Breast epithelium (tissue), 4 donors: ENCODE measurements at regions of chr6 and their contacts with region 1.

Region 1: DNA sequence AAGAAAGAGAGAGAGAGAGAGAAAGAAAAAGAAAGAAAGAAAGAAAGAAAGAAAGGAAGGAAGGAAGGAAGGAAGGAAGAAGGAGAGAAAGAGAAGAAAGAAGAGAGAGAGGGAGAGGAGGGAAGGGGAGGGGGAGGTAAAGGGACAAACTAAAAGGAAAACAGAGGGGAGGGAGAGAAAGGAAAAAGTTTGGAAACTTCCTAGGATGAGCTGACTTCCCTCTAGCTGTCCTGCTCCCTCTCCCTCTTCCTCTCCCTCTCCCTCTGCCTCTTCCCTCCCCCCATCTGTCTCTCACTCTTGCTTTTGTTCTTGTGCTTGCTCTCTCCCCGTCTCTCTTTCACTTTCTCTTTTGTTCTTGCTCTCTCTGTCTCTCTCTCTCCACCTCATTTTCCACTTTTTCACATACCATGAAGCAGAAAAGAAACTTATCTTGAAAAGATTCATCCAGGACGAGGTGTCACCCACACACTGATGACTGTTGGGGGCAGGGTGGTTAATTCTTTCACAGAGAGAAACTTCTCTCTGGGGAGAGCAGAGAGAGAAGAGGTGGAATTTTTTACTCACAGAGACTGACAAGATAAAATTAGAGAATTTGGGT is 56.4 kb upstream of the DUSP22 start:
- DNase-seq: no peak
- H3K4me3 ChIP-seq: peak overlapping the region; percentile 22 to 56 (median 35)
- H3K27ac ChIP-seq: peak overlapping the region; percentile 26 to 57
- H3K4me1 ChIP-seq: no peaks in the 10 kb centered on the region
- H3K27me3 ChIP-seq: no peaks in the 10 kb centered on the region
- CTCF ChIP-seq: no peak
- POLR2A ChIP-seq: no peak

Region 2: GRCh38 chr6:255751-256083 is 19.9 kb after region 1 on chr6:
- intact Hi-C with region 1: loop called (anchors 1 kb)
- DNase-seq: no peak
- H3K4me3 ChIP-seq: no peak overlapping the region
- H3K27ac ChIP-seq: no peak overlapping the region
- H3K4me1 ChIP-seq: no peaks in the 10 kb centered on the region
- H3K27me3 ChIP-seq: no peaks in the 10 kb centered on the region
- CTCF ChIP-seq: no peak
- POLR2A ChIP-seq: no peak

Region 3: DNA sequence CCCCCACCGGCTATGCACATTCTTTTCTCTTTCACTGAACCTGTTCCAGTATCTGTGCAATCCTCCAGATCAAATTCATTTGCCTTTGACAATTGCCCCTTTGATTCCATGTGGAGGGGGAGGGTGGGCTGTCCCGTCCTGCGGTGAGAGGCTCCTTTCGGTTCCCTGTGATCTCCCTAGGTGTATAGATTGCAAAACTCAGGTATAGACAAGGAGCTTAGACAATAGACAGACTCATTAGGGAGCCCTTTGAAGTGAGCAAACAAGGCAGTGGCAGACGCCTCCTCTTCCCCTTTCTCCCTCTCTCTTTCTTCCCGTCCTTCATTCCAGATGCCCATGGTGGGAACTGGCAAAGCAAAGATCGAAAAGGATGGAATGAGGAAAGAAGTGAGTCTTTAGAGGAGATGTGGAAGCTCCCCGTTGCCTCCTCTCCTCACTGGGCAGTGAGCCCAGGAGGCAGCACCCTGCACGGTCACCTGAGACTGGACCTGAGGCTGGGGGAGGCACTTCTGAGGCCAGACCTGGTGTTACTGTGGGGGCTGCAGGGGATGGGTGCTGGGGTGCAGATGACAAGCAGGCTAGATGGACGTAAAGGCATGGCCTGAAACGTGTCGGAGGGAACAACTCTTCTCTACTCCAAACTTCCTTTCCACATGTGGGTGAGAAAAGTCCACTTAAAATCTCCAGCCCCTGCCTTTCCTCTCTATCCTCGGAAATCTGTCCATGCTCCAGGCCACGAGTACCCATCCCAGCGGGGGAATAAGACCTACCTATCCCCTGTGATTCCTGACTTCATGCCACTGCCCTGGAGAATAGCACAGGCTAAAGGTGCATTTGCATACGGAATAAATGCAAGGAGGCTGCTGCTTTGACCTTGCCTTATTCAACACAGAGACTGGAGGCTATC is 819.4 kb after region 1 on chr6:
- intact Hi-C with region 1: loop called (anchors 5 kb)
- DNase-seq: no peak
- H3K4me3 ChIP-seq: peak overlapping the region in 1 of 3 donors; percentile 15
- H3K27ac ChIP-seq: no peak overlapping the region
- H3K4me1 ChIP-seq: no peaks in the 10 kb centered on the region
- H3K27me3 ChIP-seq: peaks cover 0 to 12% of the 10 kb centered on the region in 2 donors
- CTCF ChIP-seq: no peak
- POLR2A ChIP-seq: no peak